ENCODE measurements at regions of chr2 and their contacts with region 1.

Region 1: DNA sequence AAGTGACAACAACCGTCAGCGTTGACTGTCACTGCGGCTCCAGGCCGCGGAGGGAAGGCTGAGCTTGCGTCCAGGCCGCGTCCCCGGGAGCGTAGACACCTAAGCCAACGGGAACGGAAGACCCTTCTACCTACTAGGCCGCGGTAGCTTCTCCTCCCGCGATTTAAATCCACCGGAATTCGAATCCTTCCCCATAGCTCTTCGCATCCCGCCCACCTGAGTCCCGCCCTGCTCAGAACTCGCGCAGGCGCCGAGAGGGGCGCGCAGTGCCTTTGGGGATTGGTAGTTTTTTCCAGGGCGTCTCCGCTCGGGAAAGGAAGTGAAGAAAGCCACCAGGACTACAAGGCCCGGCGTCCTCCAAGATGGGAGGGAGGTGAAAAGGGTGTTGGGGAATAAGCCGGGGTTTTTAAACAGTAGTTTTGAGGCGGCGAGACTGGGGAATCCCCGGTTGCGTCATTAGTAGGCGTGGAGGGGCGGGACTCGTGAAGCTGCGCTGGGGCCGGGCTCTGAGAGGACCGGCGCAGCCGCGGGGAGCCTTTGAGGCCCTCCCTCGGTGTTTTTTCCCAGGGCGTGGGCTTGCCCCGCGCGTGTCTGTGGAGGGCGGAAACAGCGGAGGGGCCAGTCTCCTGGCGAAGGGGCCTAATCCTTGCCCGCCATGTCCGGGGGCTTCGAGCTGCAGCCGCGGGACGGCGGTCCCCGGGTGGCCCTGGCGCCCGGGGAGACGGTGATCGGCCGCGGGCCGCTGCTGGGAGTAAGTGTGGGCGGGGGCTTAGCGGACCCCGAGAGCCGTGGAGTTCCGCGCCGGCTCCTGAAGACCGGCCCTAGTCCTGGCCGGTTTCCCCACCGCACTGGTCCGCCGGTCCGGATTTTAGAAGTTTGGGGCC is at the starts of genes APLF and FBXO48:
- DNase-seq: peak; percentile 99
- H3K4me3 Mint-ChIP-seq: peak within 1 kb of the TSS; percentile 97
- H3K27ac Mint-ChIP-seq: peak within 1 kb of the TSS; percentile 94
- H3K4me1 Mint-ChIP-seq: peaks cover 44% of the 10 kb centered on the region
- H3K27me3 Mint-ChIP-seq: no peaks in the 10 kb centered on the region
- total RNA-seq, gene APLF: 3.0 to 3.1 TPM
- total RNA-seq, gene FBXO48: 2.3 to 2.6 TPM

Region 2: GRCh38 chr2:68251187-68251854 is 216.0 kb before region 1 on chr2:
- CTCF ChIA-PET with region 1: interaction called, 3 read pairs
- POLR2A ChIA-PET with region 1: no interaction called
- intact Hi-C with region 1: loop called (anchors 1 kb)
- DNase-seq: peak; percentile 86
- H3K4me3 Mint-ChIP-seq: peak overlapping the region; percentile 86
- H3K27ac Mint-ChIP-seq: peak overlapping the region; percentile 97
- H3K4me1 Mint-ChIP-seq: peaks cover 35% of the 10 kb centered on the region
- H3K27me3 Mint-ChIP-seq: no peaks in the 10 kb centered on the region

Region 3: DNA sequence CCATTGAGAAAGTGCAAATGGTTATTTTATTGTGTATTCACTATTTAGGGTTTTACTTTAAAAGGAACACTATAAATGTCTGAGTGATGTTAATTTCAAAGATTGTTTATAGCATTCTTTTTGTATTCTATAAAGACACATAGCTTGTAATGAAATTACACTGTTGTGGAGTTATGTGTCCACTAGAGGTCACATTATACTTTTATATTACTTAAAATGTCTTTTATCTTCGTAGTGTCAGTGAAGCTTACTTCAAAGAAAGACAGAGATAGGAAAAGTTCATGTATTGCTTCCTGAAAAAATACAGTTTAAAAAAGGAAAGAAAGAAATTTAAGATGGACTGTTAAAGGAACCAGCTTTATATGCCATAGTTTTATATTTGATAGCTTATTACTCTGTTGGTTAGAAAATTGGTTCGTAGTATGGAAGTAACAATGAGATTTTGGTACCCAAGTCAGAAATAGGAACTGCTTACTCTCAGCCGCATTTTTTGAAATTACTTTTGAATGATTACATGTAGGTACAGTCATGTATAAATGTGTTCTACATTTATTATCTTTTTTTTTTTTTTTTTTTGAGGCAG is 20.5 kb after region 1 on chr2:
- CTCF ChIA-PET with region 1: interaction called, 15 read pairs
- POLR2A ChIA-PET with region 1: no interaction called
- intact Hi-C with region 1: no loop called
- DNase-seq: no peak
- H3K4me3 Mint-ChIP-seq: no peak overlapping the region
- H3K27ac Mint-ChIP-seq: no peak overlapping the region
- H3K4me1 Mint-ChIP-seq: peaks cover 2% of the 10 kb centered on the region
- H3K27me3 Mint-ChIP-seq: no peaks in the 10 kb centered on the region

Region 4: DNA sequence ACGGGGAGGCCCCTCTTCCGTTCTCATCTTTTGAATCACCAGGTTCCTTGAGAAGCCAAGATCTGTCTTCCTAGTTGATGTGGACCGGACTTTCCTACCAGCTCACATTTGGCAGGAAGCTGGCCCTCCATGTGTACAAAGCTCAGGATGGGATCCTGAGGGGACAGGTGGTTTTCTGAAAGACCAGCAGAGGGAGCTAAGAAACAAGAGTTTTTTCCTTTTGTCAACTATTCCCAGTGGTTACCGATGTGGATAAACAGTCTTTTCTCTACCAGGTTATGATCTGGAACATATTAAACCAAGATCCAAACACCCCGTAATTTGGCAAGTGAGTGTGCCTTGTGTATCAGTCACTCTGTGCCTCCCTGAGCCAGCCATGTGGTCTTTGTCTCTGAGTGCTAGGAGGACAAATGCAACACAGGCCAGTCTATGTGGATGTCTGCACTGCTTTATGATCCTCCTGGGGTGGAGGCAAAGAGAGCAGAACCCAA is 242.1 kb after region 1 on chr2:
- CTCF ChIA-PET with region 1: interaction called, 44 read pairs
- POLR2A ChIA-PET with region 1: no interaction called
- intact Hi-C with region 1: no loop called
- DNase-seq: peak; percentile 31
- H3K4me3 Mint-ChIP-seq: no peak overlapping the region
- H3K27ac Mint-ChIP-seq: peak overlapping the region; percentile 55
- H3K4me1 Mint-ChIP-seq: peaks cover 31% of the 10 kb centered on the region
- H3K27me3 Mint-ChIP-seq: no peaks in the 10 kb centered on the region

Region 5: GRCh38 chr2:68742626-68743415 is 275.5 kb after region 1 on chr2:
- CTCF ChIA-PET with region 1: interaction called, 14 read pairs
- POLR2A ChIA-PET with region 1: interaction called, 10 read pairs
- intact Hi-C with region 1: no loop called
- DNase-seq: no peak
- H3K4me3 Mint-ChIP-seq: peak overlapping the region; percentile 40
- H3K27ac Mint-ChIP-seq: peak overlapping the region; percentile 75
- H3K4me1 Mint-ChIP-seq: peaks cover 90% of the 10 kb centered on the region
- H3K27me3 Mint-ChIP-seq: no peaks in the 10 kb centered on the region

Region 6: GRCh38 chr2:68909793-68910674 is 442.7 kb after region 1 on chr2:
- CTCF ChIA-PET with region 1: interaction called, 40 read pairs
- POLR2A ChIA-PET with region 1: interaction called, 8 read pairs
- intact Hi-C with region 1: loop called (anchors 1 kb)
- DNase-seq: peak; percentile 85
- H3K4me3 Mint-ChIP-seq: no peak overlapping the region
- H3K27ac Mint-ChIP-seq: peak overlapping the region; percentile 78
- H3K4me1 Mint-ChIP-seq: peaks cover 36% of the 10 kb centered on the region
- H3K27me3 Mint-ChIP-seq: no peaks in the 10 kb centered on the region

Region 7: DNA sequence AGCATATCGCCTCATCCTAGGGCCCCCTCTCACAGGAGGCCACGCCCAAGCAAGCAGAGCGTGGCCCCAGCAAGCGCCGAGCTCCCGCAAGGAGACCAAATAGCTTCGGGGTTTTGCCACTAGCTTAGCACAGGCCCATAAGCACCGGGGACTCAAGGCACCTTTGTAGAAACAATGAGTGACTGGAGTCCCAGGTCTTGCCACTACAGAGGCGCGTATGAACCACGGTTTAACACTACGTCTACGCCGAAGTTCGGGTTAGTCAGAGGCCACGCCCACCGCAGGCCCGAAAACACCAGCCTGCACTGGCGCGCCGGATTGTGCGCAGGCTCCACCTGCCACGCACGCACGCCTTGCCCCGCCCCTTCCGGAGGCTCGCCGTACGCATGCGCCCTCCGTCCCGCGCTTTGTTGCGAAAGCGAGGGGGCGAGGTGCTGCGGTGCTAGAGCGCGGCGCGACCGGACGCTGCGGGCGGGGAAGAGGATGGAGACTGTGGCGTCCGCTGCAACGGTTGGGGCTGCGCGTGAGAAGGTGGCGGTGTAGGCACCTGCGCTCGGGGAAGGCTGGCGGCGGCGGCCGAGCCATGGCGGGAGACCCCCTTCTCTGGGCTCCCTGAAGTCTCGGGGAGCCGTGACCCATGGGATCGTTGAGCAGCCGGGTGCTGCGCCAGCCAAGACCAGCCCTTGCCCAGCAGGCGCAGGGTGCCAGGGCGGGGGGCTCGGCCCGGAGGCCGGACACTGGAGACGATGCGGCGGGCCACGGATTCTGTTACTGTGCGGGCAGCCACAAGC is 1362.1 kb after region 1 on chr2 and contains the start of gene GMCL1:
- CTCF ChIA-PET with region 1: no interaction called
- POLR2A ChIA-PET with region 1: no interaction called
- intact Hi-C with region 1: loop called (anchors 5 kb)
- DNase-seq: peak; percentile 99
- H3K4me3 Mint-ChIP-seq: peak within 1 kb of the TSS; percentile 81
- H3K27ac Mint-ChIP-seq: peak within 1 kb of the TSS; percentile 92
- H3K4me1 Mint-ChIP-seq: peaks cover 40% of the 10 kb centered on the region
- H3K27me3 Mint-ChIP-seq: no peaks in the 10 kb centered on the region
- total RNA-seq, gene GMCL1: 20.6 to 22.1 TPM

Measured in activated CD4-positive, alpha-beta memory T cell treated with anti-CD3 and anti-CD28 coated beads for 36 hours (primary cell).